ENCODE measurements at regions of chr6 and their contacts with region 1.

Region 1: GRCh38 chr6:71672876-71673275 is 213.5 kb upstream of the RIMS1 start:
- DNase-seq: no peak
- H3K4me3 ChIP-seq: no peak overlapping the region
- H3K27ac ChIP-seq: no peak overlapping the region
- H3K4me1 ChIP-seq: no peaks in the 10 kb centered on the region
- H3K27me3 ChIP-seq: no peaks in the 10 kb centered on the region
- CTCF ChIP-seq: no peak
- POLR2A ChIP-seq: no peak

Region 2: DNA sequence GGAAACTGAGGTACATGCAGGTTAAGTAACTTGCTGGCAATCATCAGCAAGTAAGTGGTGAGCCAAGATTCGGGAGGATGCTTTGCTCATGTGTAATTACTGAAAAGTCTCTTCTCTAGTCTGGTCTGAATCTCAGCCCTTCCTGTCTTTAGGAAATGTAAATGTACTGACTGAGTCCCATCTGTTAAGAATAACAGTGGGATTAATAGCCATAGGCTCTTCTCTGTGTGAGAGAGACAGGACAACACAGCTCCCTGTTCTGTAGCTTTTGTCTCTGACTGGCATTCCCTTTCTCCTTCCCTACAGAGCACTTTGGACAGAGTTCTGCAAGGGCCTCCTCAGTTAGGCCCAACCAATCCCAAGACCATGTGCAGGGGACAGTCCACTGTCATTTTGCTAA is 515.5 kb before region 1 on chr6:
- intact Hi-C with region 1: no loop called
- DNase-seq: no peak
- H3K4me3 ChIP-seq: no peak overlapping the region
- H3K27ac ChIP-seq: no peak overlapping the region
- H3K4me1 ChIP-seq: no peaks in the 10 kb centered on the region
- H3K27me3 ChIP-seq: no peaks in the 10 kb centered on the region
- CTCF ChIP-seq: no peak
- POLR2A ChIP-seq: no peak

Region 3: GRCh38 chr6:71619836-71620235 is 53.0 kb before region 1 on chr6:
- intact Hi-C with region 1: loop called (anchors 5 kb)
- DNase-seq: no peak
- H3K4me3 ChIP-seq: no peak overlapping the region
- H3K27ac ChIP-seq: no peak overlapping the region
- H3K4me1 ChIP-seq: no peaks in the 10 kb centered on the region
- H3K27me3 ChIP-seq: no peaks in the 10 kb centered on the region
- CTCF ChIP-seq: no peak
- POLR2A ChIP-seq: no peak